Endothelial cell of umbilical vein (primary cell): ENCODE measurements at regions of chr5 and their contacts with region 1.

Region 1: DNA sequence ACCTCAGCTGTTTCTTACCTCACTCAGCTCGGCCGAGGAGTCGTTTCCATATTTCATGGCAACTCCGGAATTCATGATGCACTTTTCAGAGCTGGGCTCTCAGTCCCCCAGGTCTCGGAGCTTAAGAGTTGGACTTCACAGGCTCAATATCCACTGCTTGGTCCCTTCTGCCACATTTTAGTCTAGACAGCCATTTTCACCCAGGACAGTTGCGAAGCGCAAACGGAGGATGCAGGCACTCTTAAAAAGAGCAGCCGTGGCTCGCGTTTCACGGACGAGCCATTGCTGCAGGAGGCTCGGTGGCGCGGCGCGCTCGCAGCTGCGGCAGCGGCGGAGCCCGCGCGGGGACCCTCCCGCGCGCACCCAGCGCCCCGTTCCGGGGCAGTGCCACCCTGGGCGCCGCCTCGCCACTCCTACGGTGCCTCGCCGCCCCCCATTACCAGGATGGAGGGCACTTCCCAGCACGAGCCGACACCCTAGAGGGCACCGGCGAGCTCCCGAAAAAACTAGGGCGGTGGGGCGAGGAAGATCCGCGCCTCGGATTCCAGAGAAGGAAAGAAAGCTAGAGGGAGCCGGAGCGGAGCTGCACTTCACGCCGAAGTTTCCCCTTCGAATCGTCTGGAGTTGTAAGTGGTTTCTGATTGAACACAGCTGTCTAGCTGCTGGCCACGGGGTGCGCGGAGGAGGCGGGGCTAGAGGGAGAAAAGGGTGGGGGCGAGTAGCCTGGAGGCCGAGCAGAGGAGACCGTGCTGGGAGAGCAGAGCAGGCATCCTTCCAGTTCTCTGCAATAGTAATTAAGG is 140.3 kb downstream of the TSSK1B start:
- DNase-seq: peak; percentile 92
- H3K4me3 ChIP-seq: peak overlapping the region; percentile 52 to 86 (median 54)
- H3K27ac ChIP-seq: peak overlapping the region; percentile 65
- H3K4me1 ChIP-seq: peaks cover 31% of the 10 kb centered on the region
- H3K27me3 ChIP-seq: no peaks in the 10 kb centered on the region
- CTCF ChIP-seq: peak in 1 of 2 donors; percentile 24
- POLR2A ChIP-seq: peak; percentile 77

Region 2: GRCh38 chr5:113123618-113124017 is 170.9 kb before region 1 on chr5:
- CTCF ChIA-PET with region 1: interaction called, 4 read pairs
- POLR2A ChIA-PET with region 1: no interaction called
- dilution Hi-C with region 1: no loop called
- intact Hi-C with region 1: loop called (anchors 5 kb)
- DNase-seq: peak; percentile 22
- H3K4me3 ChIP-seq: no peak overlapping the region
- H3K27ac ChIP-seq: no peak overlapping the region
- H3K4me1 ChIP-seq: no peaks in the 10 kb centered on the region
- H3K27me3 ChIP-seq: no peaks in the 10 kb centered on the region
- CTCF ChIP-seq: peak; percentile 25 to 28
- POLR2A ChIP-seq: no peak

Region 3: DNA sequence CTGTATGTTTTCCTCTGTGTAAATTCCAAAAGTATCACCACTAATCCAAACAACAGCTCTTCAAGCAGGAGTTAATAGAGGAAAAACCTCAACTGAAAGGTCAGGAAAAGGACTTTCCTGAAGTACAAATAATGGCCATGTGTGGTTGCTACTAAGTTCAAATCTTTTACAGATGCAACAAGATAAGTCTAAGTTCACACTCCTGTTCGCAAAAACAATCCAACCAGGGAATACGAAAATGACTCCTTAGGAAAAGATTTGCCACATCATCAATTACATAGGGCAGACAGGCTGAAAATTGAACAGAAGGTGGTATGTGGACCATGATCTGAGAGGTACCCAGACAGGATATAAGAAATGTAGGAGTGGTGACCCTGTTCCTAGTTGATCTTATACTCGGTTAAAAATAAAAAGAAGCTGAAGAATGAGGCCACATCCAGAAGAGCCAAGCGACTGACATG is 69.9 kb before region 1 on chr5:
- CTCF ChIA-PET with region 1: interaction called, 5 read pairs
- POLR2A ChIA-PET with region 1: no interaction called
- dilution Hi-C with region 1: no loop called
- intact Hi-C with region 1: loop called (anchors 1 kb)
- DNase-seq: peak; percentile 96
- H3K4me3 ChIP-seq: no peak overlapping the region
- H3K27ac ChIP-seq: peak overlapping the region; percentile 56
- H3K4me1 ChIP-seq: peaks cover 43% of the 10 kb centered on the region
- H3K27me3 ChIP-seq: no peaks in the 10 kb centered on the region
- CTCF ChIP-seq: no peak
- POLR2A ChIP-seq: no peak

Region 4: GRCh38 chr5:113271015-113271414 is 23.5 kb before region 1 on chr5:
- CTCF ChIA-PET with region 1: interaction called, 4 read pairs
- POLR2A ChIA-PET with region 1: no interaction called
- dilution Hi-C with region 1: no loop called
- intact Hi-C with region 1: loop called (anchors 1 kb)
- DNase-seq: peak; percentile 90
- H3K4me3 ChIP-seq: no peak overlapping the region
- H3K27ac ChIP-seq: peak overlapping the region; percentile 75
- H3K4me1 ChIP-seq: peaks cover 53% of the 10 kb centered on the region
- H3K27me3 ChIP-seq: no peaks in the 10 kb centered on the region
- CTCF ChIP-seq: no peak
- POLR2A ChIP-seq: no peak